MCF 10A (cell line): ENCODE measurements at regions of chr7 and their contacts with region 1.

Region 1: GRCh38 chr7:12423355-12423994 is 19.8 kb upstream of the VWDE start:
- DNase-seq: peak; percentile 64
- H3K4me3 Mint-ChIP-seq: peak overlapping the region; percentile 0
- H3K27ac Mint-ChIP-seq: peak overlapping the region; percentile 32
- H3K4me1 Mint-ChIP-seq: peaks cover 17% of the 10 kb centered on the region
- H3K27me3 Mint-ChIP-seq: no peaks in the 10 kb centered on the region
- CTCF ChIP-seq: no peak

Region 2: DNA sequence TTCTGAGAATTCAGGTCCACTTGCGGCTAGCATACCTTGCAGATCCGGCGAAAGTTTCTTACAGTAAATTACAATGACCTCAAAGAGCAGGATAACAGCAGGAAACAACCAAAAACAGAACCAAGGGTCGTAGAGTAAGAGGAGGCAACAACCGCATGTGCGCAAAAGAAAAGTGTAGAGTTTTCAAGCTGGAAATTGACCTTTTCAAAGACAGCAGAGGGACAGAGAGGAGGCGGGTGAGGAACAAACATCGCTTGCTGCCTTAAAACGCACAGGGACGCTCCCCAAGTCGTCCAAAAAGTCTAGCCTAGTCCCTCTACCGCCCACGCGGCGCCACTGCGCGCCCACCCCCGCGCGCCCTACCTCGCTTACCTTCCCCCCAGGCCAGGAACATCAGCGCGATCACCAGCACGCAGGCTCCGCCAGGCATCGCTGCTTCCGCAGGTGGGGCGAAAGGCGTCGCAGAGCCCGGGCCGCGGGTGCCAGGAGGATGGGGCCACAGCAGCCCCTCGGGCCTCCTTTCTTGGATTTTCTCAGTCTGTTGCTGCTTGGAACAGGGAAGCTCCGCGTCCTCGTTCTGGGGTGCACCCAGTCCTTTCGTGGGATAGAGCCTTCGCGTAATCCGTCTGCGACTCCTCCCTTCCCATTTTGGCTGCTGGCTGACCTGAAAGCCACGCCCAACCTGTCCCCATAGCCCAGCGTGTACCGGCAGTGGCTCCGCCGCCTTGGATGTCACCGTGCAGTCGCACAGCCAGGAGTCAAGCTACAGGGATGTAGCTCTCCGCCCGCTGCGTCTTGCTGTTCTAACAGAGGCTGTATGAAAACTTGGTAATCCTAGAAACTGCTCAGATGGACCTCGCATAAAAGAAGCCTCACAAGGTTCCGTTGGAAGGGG is 19.9 kb before region 1 on chr7 and contains the start of gene VWDE:
- CTCF ChIA-PET with region 1: interaction called, 5 read pairs
- POLR2A ChIA-PET with region 1: interaction called, 11 read pairs
- intact Hi-C with region 1: no loop called
- DNase-seq: peak; percentile 49
- H3K4me3 Mint-ChIP-seq: peak within 1 kb of the TSS; percentile 75
- H3K27ac Mint-ChIP-seq: peak within 1 kb of the TSS; percentile 20
- H3K4me1 Mint-ChIP-seq: no peaks in the 10 kb centered on the region
- H3K27me3 Mint-ChIP-seq: peaks cover 16% of the 10 kb centered on the region
- CTCF ChIP-seq: no peak
- total RNA-seq, gene VWDE: 3.0 and 3.1 TPM in 2 replicates

Region 3: DNA sequence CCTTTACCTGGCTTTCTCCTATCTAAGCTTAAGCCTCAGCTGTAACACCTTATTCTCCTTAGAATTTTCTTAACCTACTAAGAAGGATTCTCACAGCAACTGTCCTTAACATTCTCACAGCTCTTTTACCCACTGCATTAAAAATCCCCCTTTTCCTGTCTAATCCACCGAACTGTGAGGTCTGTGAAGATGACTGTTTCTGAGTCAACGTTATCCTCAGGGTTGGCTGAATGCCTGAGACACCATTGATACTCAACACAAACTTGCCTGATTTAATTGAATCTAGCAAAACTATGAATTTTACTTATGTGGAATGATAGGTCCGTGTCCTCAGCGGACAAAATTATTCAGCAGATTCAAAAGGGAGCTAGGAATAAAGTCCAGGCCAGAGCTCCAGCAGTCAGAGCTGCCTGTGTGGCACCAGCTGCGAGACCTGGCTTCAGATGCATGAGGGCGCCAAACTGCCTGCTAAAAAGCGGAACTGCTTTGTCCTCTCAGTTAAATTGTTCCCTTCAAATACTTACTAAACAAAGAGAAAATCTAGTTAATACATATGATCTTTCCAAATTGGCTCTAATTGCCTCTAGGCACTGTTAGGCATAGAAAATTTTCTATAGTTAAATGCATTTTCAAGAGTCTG is 13.5 kb after region 1 on chr7:
- CTCF ChIA-PET with region 1: interaction called, 11 read pairs
- POLR2A ChIA-PET with region 1: interaction called, 5 read pairs
- intact Hi-C with region 1: no loop called
- DNase-seq: peak; percentile 26
- H3K4me3 Mint-ChIP-seq: no peak overlapping the region
- H3K27ac Mint-ChIP-seq: no peak overlapping the region
- H3K4me1 Mint-ChIP-seq: peaks cover 9% of the 10 kb centered on the region
- H3K27me3 Mint-ChIP-seq: peaks cover 10% of the 10 kb centered on the region
- CTCF ChIP-seq: no peak

Region 4: GRCh38 chr7:12851142-12851541 is 427.7 kb after region 1 on chr7:
- CTCF ChIA-PET with region 1: no interaction called
- POLR2A ChIA-PET with region 1: no interaction called
- intact Hi-C with region 1: no loop called
- DNase-seq: no peak
- H3K4me3 Mint-ChIP-seq: no peak overlapping the region
- H3K27ac Mint-ChIP-seq: no peak overlapping the region
- H3K4me1 Mint-ChIP-seq: no peaks in the 10 kb centered on the region
- H3K27me3 Mint-ChIP-seq: no peaks in the 10 kb centered on the region
- CTCF ChIP-seq: no peak